Right ventricle myocardium inferior (tissue), 1 donor: ENCODE measurements at regions of chr11 and their contacts with region 1.

Region 1: DNA sequence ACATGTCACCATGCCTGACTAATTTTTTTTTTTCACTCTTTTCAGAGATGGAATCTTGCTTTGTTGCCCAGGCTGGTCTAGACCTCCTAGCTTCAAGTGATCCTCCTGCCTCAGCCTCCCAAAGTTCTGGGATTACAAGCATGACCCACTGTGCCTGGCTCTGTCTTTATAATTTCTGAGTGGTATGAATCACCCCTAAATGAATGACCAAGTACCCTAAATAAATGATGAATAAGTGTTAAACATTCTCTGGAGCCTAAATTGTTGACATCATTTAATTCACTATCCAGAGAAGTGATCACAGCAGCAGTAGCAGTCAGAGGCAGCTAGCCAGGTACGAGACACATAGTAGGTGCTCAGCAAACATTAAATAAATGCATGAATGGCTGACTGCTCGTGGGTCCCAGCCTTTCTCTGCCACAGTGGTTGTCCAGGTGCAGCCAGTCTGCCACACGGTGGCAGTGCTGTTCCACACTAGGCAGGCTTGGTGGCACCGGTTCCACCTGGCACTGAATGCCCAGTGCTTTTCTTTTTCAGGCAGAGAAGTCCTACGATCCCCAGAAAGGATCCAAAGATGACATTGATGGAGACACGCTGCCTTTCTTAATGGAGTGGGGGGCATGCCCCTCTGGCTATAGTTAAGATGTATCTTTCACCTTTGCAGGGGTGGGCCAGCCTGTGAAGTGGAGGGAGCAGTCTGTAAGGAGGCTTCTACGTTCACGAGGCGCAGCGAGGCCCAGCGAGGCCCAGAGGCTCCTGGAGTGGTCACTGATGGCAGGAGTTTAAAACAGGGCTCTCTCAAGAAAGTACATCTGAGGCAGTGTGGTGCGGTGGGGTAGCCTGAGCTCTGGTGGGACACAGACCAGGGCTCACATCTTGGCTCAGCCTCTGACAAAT is 8.7 kb upstream of the TTC12 start:
- DNase-seq: peak; percentile 87
- ATAC-seq: peak; percentile 88

Region 2: GRCh38 chr11:113267493-113267892 is 38.2 kb before region 1 on chr11:
- intact Hi-C with region 1: no loop called
- DNase-seq: no peak
- ATAC-seq: no peak

Region 3: DNA sequence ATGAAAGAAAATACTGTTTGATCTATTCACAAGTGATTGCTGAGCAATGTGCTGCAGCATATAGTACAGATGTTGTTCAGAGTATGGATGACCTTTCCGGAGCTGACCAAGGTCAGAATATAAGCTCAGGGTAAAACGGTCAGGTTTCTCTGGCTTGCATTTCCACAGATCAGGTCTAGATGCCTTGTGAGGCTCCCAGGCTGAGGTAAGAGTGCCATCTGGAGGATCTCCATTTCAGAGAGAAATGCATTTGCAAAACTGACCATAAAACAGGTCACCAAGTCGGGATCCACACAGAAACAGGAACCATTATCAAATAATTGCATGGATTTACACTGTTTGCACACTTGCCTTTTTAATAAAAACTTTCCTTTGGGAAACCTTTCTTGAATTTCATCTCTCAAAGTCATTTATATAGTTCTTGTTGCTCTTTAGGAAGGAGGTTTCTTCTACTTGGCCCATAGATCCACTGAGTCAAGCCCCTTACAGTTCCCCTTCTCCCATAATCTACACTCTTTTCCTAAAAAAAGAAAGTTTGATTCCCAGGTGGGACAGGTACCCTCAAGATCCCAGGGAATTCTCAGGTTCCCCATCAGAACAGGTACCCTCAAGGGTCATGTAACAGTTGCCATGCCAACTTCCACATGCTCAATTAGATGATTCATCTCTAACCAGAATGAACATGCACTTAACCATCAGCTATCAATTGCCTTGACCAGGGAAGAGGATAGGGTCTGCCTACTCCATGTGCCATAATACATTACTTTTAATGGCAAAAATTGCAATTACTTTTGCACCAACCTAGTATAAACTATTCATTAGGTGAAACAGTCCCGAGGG is 425.4 kb after region 1 on chr11:
- intact Hi-C with region 1: loop called (anchors 1 kb)
- DNase-seq: no peak
- ATAC-seq: peak; percentile 42

Region 4: DNA sequence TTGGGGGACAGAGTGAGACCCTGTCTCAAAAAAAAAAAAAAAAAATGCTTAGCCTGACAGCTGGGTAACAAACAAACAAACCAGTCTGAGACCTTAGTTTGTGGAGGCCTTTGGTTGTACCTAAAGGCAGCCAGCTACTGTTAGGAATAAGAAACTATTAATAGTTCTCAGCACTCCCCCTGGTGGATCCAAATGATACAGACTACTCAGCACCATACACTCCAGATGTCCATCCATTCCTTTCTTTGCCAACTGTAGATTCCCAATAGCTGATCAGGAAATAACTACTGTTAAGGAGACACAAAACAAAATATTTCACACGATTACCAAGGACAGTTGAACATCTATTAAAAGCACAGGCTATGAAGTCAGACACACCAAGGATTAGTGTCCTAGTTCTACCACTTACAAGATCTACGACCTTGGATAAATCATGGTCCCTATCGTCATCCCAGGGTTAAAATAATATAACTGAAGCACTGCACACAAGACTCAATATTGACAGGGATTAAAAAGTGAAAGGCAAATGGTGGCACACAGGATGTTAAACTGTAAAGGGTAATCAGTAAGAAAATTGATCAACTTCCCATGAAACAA is 491.1 kb after region 1 on chr11:
- intact Hi-C with region 1: loop called (anchors 10 kb)
- DNase-seq: no peak
- ATAC-seq: peak; percentile 90